Calu3 (cell line): ENCODE measurements at regions of chr11 and their contacts with region 1.

Region 1: DNA sequence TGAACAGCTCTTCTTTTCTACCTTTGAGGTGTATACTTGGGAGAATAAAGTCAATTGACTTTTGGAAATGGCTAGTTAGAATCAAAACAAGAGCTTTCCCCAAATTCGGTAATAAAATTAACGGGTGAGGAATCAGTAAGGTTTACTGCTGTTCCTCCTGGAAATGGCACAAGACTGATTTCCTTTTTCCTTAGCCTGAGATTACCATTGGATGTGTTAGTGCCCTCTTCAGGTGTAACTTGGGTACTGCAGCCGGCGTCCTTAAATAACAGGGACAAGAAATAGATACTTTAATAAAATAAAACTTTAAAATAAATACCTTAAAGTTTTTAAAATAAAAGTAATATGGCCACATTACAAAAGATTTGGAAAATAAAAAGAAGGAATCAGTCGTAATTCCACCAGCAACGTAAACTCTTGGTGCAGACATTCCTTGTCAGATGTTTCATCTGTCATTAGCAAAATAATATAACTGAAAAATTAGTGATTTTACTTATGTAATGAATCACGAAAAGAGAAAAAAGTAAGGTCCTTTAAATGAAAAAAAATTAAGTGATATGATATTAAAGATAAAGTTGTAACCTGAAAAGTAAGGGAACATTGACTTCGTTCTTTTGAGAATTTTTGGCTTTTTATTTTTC is 29.7 kb downstream of the ZFTA start:
- DNase-seq: peak; percentile 70
- H3K4me3 Mint-ChIP-seq: no peak overlapping the region
- H3K27ac Mint-ChIP-seq: no peak overlapping the region
- H3K4me1 Mint-ChIP-seq: peaks cover 9% of the 10 kb centered on the region
- H3K27me3 Mint-ChIP-seq: no peaks in the 10 kb centered on the region
- CTCF ChIP-seq: peak; percentile 79

Region 2: DNA sequence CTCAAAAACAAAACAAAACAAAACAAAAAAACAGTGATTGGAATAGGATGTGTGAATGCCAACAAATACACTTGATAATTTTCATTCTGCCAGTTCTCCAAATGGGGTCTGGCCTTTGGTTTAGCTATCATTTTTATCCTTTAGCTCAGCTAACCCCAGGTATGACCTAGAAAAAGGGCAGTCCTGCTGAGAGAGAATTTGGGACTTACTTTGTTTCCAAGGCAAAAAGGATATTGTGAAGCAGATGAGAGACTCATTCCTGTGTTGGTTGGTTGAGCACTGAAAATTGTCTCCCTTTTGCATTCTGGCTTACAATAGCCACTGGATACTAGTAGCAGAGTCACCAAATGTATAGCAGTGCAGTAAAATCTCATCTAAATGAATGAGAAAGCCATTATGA is 1001.6 kb before region 1 on chr11:
- CTCF ChIA-PET with region 1: no interaction called
- intact Hi-C with region 1: no loop called
- DNase-seq: no peak
- H3K4me3 Mint-ChIP-seq: no peak overlapping the region
- H3K27ac Mint-ChIP-seq: no peak overlapping the region
- H3K4me1 Mint-ChIP-seq: no peaks in the 10 kb centered on the region
- H3K27me3 Mint-ChIP-seq: no peaks in the 10 kb centered on the region
- CTCF ChIP-seq: no peak

Region 3: GRCh38 chr11:62753736-62754603 is 984.9 kb before region 1 on chr11 and contains the start of gene ZBTB3:
- CTCF ChIA-PET with region 1: no interaction called
- intact Hi-C with region 1: no loop called
- DNase-seq: peak; percentile 96
- H3K4me3 Mint-ChIP-seq: peak within 1 kb of the TSS; percentile 92
- H3K27ac Mint-ChIP-seq: peak within 1 kb of the TSS; percentile 93
- H3K4me1 Mint-ChIP-seq: no peaks in the 10 kb centered on the region
- H3K27me3 Mint-ChIP-seq: no peaks in the 10 kb centered on the region
- CTCF ChIP-seq: no peak
- total RNA-seq, gene ZBTB3: 9.7 and 10.6 TPM in 2 replicates

Region 4: GRCh38 chr11:63641727-63642126 is 97.1 kb before region 1 on chr11:
- CTCF ChIA-PET with region 1: interaction called, 4 read pairs
- intact Hi-C with region 1: loop called (anchors 5 kb)
- DNase-seq: no peak
- H3K4me3 Mint-ChIP-seq: no peak overlapping the region
- H3K27ac Mint-ChIP-seq: no peak overlapping the region
- H3K4me1 Mint-ChIP-seq: no peaks in the 10 kb centered on the region
- H3K27me3 Mint-ChIP-seq: no peaks in the 10 kb centered on the region
- CTCF ChIP-seq: no peak

Region 5: DNA sequence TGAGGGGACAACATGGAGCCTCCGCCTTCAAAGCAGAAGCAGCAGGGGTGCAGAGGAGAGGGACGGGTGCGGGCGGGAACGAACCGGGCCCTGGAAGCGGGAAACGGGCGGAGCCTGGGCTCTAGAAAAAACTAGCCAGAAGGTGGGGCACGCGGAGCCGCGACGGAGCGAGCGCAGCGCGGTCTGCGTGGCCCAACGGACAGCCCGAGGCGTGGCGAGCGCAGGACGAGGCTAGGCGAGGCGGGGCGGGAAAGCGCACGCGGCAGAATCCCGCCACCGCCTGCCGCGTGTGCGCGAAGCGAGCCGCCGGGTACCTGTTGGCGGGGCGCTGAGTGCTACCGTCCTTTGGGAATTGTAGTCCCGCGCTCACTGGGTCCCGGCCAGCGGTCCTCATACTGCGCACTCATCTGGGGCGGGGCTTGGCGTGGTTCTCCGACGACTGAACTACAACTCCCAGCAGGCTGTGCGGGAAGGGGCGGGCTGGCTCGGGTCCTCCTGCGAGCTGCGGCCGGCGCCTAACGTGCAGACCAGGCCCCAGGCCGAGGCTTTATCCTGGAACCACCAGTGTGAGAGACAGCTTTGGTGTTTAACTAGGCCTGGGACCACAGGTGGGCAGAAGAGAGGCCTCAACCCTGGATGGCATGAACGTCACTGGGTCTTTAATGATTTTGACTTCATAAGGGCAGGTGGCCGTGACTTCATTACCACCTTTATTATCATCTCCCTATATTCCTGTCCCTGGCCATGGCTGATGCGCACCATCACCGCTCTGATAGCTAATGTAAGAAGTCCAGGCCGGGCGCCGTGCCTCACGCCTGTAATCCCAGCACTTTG is 67.3 kb before region 1 on chr11 and contains the start of gene ATL3:
- CTCF ChIA-PET with region 1: interaction called, 5 read pairs
- intact Hi-C with region 1: loop called (anchors 1 kb)
- DNase-seq: peak; percentile 96
- H3K4me3 Mint-ChIP-seq: peak within 1 kb of the TSS; percentile 75
- H3K27ac Mint-ChIP-seq: peak within 1 kb of the TSS; percentile 84
- H3K4me1 Mint-ChIP-seq: peaks cover 25% of the 10 kb centered on the region
- H3K27me3 Mint-ChIP-seq: no peaks in the 10 kb centered on the region
- CTCF ChIP-seq: no peak
- total RNA-seq, gene ATL3: 43.6 and 52.2 TPM in 2 replicates

Region 6: GRCh38 chr11:63681321-63682049 is 57.4 kb before region 1 on chr11 and contains the start of gene RTN3:
- CTCF ChIA-PET with region 1: no interaction called
- intact Hi-C with region 1: loop called (anchors 5 kb)
- DNase-seq: peak; percentile 98
- H3K4me3 Mint-ChIP-seq: peak within 1 kb of the TSS; percentile 96
- H3K27ac Mint-ChIP-seq: peak within 1 kb of the TSS; percentile 83
- H3K4me1 Mint-ChIP-seq: peaks cover 10% of the 10 kb centered on the region
- H3K27me3 Mint-ChIP-seq: no peaks in the 10 kb centered on the region
- CTCF ChIP-seq: no peak
- total RNA-seq, gene RTN3: 133 and 146 TPM in 2 replicates